Activated CD4-positive, alpha-beta T cell treated with anti-CD3 and anti-CD28 coated beads, Interleukin-2, amount 10 ng/mL, durations not matched to agents 24 days and 14 days (primary cell): ENCODE measurements at regions of chr1 and their contacts with region 1.

Region 1: GRCh38 chr1:109687616-109688499 is at the start of gene GSTM1:
- DNase-seq: peak; percentile 97
- H3K4me3 Mint-ChIP-seq: peak within 1 kb of the TSS; percentile 87
- H3K27ac Mint-ChIP-seq: peak within 1 kb of the TSS; percentile 94
- H3K4me1 Mint-ChIP-seq: peaks cover 22% of the 10 kb centered on the region
- H3K27me3 Mint-ChIP-seq: no peaks in the 10 kb centered on the region
- total RNA-seq, gene GSTM1: 92.2 and 94.2 TPM in 2 replicates

Region 2: DNA sequence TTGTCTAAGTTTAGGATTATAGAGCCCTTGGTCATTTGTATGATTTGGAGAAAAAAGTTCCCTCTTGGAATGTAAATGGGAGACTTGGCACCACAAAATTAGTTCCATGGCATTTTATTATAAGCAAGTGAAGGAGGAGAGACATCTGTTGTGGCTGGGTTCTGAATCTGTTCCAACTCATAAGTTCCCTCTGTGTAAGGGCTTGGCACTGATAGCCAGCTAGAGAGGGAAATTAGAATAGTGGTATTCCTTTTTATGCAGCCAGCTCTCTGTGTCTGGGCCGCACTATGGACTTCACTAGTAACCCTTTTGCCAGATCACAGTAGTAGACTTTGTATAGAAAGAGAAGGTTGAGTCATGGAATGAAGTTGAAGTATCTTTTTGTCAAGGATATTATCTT is 108.4 kb before region 1 on chr1:
- intact Hi-C with region 1: no loop called
- DNase-seq: no peak
- H3K4me3 Mint-ChIP-seq: no peak overlapping the region
- H3K27ac Mint-ChIP-seq: no peak overlapping the region
- H3K4me1 Mint-ChIP-seq: no peaks in the 10 kb centered on the region
- H3K27me3 Mint-ChIP-seq: no peaks in the 10 kb centered on the region

Region 3: GRCh38 chr1:109712321-109712864 is 24.5 kb after region 1 on chr1:
- intact Hi-C with region 1: no loop called
- DNase-seq: no peak
- H3K4me3 Mint-ChIP-seq: no peak overlapping the region
- H3K27ac Mint-ChIP-seq: no peak overlapping the region
- H3K4me1 Mint-ChIP-seq: peaks cover 2% of the 10 kb centered on the region
- H3K27me3 Mint-ChIP-seq: peaks cover 2% of the 10 kb centered on the region

Region 4: GRCh38 chr1:109739738-109740660 is 52.1 kb after region 1 on chr1:
- intact Hi-C with region 1: loop called (anchors 2 kb)
- DNase-seq: peak; percentile 96
- H3K4me3 Mint-ChIP-seq: peak overlapping the region; percentile 87
- H3K27ac Mint-ChIP-seq: peak overlapping the region; percentile 64
- H3K4me1 Mint-ChIP-seq: peaks cover 6% of the 10 kb centered on the region
- H3K27me3 Mint-ChIP-seq: peaks cover 31% of the 10 kb centered on the region